MCF 10A (cell line): ENCODE measurements at regions of chr3 and their contacts with region 1.

Region 1: DNA sequence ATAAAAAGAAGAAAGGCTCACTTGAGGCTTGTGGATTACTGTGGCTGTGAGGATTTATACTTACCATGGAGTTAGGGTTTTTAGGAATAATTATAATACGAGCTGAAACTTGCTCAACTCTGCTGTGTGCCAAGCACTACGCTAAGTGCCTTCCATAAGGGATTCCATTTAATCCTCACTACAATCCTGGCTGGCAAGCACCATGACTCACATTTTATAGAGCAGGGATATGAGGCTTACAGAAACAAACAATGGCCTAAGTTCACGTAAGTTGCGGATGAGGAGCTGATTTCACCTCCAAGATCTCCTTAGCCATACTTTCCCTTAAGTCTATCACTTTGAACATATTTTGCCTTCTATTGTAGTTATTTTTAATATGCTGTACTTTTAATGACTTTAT is 43.9 kb upstream of the ARL8B start:
- DNase-seq: peak; percentile 89
- H3K4me3 Mint-ChIP-seq: no peak overlapping the region
- H3K27ac Mint-ChIP-seq: peak overlapping the region; percentile 27
- H3K4me1 Mint-ChIP-seq: peaks cover 5% of the 10 kb centered on the region
- H3K27me3 Mint-ChIP-seq: no peaks in the 10 kb centered on the region
- CTCF ChIP-seq: no peak

Region 2: GRCh38 chr3:5035692-5036391 is 42.3 kb before region 1 on chr3:
- CTCF ChIA-PET with region 1: no interaction called
- POLR2A ChIA-PET with region 1: no interaction called
- intact Hi-C with region 1: no loop called
- DNase-seq: no peak
- H3K4me3 Mint-ChIP-seq: no peak overlapping the region
- H3K27ac Mint-ChIP-seq: no peak overlapping the region
- H3K4me1 Mint-ChIP-seq: no peaks in the 10 kb centered on the region
- H3K27me3 Mint-ChIP-seq: no peaks in the 10 kb centered on the region
- CTCF ChIP-seq: no peak

Region 3: DNA sequence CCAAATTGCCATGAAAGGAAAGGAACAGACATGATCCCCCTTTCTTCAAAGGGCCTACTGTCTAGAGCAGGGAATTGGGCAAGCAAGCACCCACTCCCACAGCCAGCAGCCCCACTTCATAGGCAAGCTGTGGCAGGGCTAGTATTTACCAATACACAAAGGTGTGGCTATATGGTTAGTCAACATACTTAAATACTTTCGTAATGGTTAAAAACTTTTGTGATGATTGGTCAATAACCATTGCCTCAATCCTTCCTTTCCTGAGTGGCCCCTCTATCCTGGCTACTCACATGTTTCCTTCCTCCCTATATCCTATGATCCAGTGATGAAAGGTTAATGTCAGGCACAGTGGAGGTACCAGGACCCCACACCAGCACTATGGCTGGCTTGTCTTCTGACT is 13.9 kb after region 1 on chr3:
- CTCF ChIA-PET with region 1: interaction called, 5 read pairs
- POLR2A ChIA-PET with region 1: interaction called, 10 read pairs
- intact Hi-C with region 1: no loop called
- DNase-seq: peak; percentile 58
- H3K4me3 Mint-ChIP-seq: no peak overlapping the region
- H3K27ac Mint-ChIP-seq: no peak overlapping the region
- H3K4me1 Mint-ChIP-seq: no peaks in the 10 kb centered on the region
- H3K27me3 Mint-ChIP-seq: no peaks in the 10 kb centered on the region
- CTCF ChIP-seq: no peak